Kidney (tissue), 22 donors: ENCODE measurements at regions of chr1 and their contacts with region 1.

Region 1: DNA sequence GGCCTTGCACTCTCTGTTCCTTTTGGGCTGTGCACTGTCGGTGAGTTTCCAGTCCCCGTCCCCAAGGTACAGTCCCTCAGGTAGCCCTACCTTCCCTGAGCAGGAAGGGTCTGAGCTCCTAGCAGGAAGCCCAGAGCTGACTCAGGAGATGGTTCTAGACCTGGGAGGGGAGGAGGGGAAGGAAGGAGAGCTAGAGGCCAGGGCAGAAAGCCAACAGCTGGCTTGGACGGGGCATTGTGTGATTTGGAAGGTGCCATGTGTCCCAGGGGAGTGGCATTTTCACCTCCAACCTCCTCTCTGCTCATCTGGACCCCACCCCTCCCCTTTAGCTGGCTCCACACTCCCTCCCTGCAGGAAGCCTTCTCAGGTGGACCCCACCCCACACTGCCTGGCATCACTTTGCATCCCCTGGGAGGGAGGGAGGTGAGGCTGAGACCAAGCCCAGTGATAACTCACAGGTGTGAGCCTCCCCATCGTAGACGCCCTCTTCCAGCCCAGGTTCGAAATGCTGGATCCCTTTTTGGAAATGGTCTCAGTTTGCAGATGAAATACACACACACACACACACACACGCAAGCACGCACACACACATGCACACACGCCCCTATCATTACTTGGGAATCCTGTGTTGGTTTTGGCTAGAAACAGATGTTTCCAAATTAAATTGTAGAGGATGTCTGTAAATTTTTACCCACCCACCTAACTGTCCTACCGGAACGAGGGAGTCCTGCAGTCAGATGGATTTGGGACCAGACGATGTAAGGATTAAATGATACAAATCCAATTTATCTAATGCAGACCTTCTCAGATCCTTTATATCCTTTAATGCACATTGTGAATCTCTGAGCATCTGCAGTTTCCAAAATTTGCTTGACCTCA is 19.7 kb upstream of the IFNLR1 start:
- DNase-seq: peak in 1 of 5 donors; percentile 42
- H3K4me3 ChIP-seq: no peak overlapping the region
- H3K27ac ChIP-seq: no peak overlapping the region
- H3K4me1 ChIP-seq: no peaks in the 10 kb centered on the region
- H3K27me3 ChIP-seq: no peaks in the 10 kb centered on the region
- CTCF ChIP-seq: no peak

Region 2: GRCh38 chr1:24385160-24385940 is 178.6 kb after region 1 on chr1:
- intact Hi-C with region 1: loop called (anchors 5 kb)
- DNase-seq: no peak
- H3K4me3 ChIP-seq: no peak overlapping the region
- H3K27ac ChIP-seq: no peak overlapping the region
- H3K4me1 ChIP-seq: peaks cover 0 to 11% (median 9%) of the 10 kb centered on the region in 3 donors
- H3K27me3 ChIP-seq: no peaks in the 10 kb centered on the region
- CTCF ChIP-seq: peak; percentile 7

Region 3: DNA sequence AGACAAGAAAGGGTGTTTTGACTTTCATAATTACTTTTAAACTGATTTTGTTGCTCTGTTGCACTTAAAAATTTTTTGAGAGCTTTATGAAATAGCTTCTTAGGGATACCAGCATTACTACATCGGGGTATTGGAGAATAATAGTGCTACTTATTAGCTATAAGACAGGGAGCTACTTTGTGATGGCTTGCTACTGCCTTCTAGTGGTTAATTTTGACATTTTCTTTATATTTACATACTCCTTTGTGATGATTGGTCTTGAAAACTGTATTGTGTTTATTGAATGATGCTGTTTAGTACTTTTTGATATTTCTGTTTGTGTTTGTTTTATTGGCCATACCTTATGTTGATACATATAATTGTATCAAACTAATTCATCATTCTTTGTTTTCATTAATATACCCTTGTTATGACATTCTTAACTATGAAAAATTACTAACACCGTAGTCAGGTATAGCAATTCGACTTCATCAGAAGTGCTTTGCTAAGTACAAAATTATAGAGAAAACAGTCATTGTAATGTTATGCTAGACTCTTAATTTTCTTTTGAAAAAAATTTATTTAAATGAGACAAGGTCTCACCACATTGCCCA is 624.0 kb after region 1 on chr1:
- intact Hi-C with region 1: no loop called
- DNase-seq: peak in 2 of 5 donors; percentile 82 to 85
- H3K4me3 ChIP-seq: no peak overlapping the region
- H3K27ac ChIP-seq: no peak overlapping the region
- H3K4me1 ChIP-seq: peaks cover 2 to 10% (median 2%) of the 10 kb centered on the region in 3 donors
- H3K27me3 ChIP-seq: no peaks in the 10 kb centered on the region
- CTCF ChIP-seq: peak; percentile 65